G401 (cell line): ENCODE measurements at regions of chr1 and their contacts with region 1.

Region 1: DNA sequence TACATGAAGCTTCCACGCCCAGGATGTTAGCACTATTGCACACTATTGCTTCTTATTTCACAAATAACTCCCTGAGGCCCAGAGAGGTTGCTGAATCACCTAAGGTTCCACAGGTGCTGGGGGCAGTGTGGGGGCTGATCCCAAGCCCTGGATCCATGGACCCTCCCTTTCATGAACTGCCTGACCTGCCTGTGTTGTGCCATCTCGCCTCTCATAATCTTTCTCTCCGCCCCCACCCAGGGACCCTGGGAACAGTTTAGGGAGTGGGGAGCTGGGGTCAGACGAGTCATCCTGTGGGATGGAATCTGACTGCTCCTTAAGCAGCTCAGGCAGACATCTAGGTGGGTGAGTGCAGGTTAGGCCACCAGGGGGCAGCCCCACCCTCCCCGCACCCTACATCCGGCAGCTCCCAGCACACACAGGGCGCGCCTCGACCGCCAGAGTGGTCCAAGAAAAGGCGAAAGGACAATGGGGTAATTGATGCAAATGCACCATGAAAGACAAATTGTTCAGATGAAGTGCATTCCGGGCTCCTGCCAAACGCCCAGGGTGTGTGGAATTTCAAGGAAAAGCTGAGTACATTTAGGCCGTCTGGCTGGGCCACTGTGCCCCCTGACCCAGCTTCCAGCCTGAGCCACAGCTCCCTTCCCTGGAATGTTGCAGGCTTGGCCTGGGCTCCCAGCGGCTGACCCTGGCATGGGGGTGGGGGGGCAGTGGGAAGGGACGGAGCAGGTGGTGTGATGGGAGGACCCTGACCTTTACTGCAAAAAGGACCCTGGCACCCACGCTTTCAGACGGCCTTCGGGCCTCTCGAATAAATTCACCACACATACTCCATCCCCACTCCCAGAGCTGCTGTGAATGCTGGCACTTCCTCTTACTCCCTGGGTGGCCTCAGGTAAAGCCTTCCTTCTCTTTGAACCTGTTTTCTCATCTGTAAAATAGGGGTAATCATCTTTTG is 20.8 kb downstream of the PHLDA3 start:
- DNase-seq: peak; percentile 48

Region 2: DNA sequence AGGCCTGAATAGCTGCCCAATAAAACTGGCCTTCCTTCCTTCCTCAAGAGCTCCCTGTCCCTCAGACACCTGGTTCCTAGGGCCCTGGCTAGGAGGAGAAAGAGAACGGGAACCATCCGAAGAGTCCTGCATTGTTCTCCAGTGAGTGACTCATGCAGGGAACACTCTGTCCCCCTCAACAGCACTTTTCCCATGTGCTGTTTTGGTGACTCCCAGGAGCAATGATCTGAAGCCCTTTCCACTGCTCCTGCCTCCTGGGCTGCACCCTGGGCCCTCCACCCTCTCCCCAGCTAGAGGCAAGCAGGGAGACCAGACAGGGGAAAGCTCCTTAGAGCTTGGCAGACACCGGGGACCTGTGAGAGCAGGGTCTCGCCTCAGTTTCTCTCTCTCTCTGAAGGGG is 89.6 kb before region 1 on chr1:
- in situ Hi-C with region 1: loop called (anchors 5 kb)
- DNase-seq: no peak

Region 3: GRCh38 chr1:201506556-201507359 is 58.6 kb after region 1 on chr1 and contains the start of gene CSRP1:
- in situ Hi-C with region 1: no loop called
- DNase-seq: no peak
- total RNA-seq, gene CSRP1: 176 and 198 TPM in 2 replicates